GM10248 (cell line): ENCODE measurements at regions of chr5 and their contacts with region 1.

Region 1: GRCh38 chr5:112419986-112420864 is 1.1 kb upstream of the EPB41L4A start:
- DNase-seq: peak; percentile 83
- CTCF ChIP-seq: peak; percentile 91

Region 2: DNA sequence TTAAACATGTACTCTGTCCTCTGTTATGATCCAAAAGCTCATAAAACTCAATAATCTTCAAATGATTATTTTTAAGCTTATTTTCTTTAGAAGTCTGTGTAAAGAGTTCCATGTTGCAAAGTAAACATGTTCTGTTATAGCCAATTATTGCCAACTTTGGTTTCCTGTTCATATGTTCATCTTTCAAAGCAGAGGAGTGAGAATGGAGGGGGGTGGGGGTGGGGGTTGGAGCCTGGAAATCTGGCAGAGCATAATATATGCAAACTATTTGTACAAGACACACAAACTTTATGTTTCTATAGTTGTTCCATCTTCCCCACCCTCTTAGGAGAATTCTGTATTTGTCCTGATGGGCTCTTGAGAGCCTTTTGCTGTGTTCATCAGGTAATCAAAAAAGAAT is 1042.9 kb before region 1 on chr5:
- CTCF ChIA-PET with region 1: no interaction called
- POLR2A ChIA-PET with region 1: no interaction called
- DNase-seq: no peak
- CTCF ChIP-seq: no peak

Region 3: GRCh38 chr5:112165897-112166806 is 254.1 kb before region 1 on chr5:
- CTCF ChIA-PET with region 1: interaction called, 115 read pairs
- POLR2A ChIA-PET with region 1: interaction called, 3 read pairs
- DNase-seq: no peak
- CTCF ChIP-seq: no peak

Region 4: GRCh38 chr5:112183103-112183711 is 237.0 kb before region 1 on chr5:
- CTCF ChIA-PET with region 1: interaction called, 115 read pairs
- POLR2A ChIA-PET with region 1: no interaction called
- DNase-seq: no peak
- CTCF ChIP-seq: no peak

Region 5: GRCh38 chr5:112239996-112240395 is 180.2 kb before region 1 on chr5:
- CTCF ChIA-PET with region 1: interaction called, 34 read pairs
- POLR2A ChIA-PET with region 1: no interaction called
- DNase-seq: no peak
- CTCF ChIP-seq: no peak

Region 6: GRCh38 chr5:112403069-112403468 is 17.2 kb before region 1 on chr5:
- CTCF ChIA-PET with region 1: interaction called, 10 read pairs
- POLR2A ChIA-PET with region 1: no interaction called
- DNase-seq: no peak
- CTCF ChIP-seq: no peak

Region 7: DNA sequence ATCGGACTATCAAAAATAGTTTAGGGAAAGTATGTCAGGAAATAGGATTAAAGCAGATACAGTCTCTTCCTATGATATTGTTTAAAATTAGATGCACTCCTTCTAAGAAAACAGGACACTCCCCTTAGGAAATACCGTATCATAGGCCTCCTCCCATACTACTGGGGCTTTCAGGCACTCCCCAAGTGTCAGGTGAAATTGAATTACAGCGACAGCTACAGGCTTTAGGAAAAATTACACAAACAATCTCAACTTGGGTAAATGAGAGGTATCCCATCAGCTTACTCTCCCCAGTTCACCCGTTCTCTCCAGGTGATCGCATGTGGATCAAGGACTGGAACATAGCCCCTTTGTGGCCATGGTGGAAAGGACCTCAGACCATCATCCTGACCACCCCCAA is 109.3 kb after region 1 on chr5:
- CTCF ChIA-PET with region 1: interaction called, 11 read pairs
- POLR2A ChIA-PET with region 1: no interaction called
- DNase-seq: no peak
- CTCF ChIP-seq: peak; percentile 37